IMR-90 (cell line): ENCODE measurements at regions of chr10 and their contacts with region 1.

Region 1: DNA sequence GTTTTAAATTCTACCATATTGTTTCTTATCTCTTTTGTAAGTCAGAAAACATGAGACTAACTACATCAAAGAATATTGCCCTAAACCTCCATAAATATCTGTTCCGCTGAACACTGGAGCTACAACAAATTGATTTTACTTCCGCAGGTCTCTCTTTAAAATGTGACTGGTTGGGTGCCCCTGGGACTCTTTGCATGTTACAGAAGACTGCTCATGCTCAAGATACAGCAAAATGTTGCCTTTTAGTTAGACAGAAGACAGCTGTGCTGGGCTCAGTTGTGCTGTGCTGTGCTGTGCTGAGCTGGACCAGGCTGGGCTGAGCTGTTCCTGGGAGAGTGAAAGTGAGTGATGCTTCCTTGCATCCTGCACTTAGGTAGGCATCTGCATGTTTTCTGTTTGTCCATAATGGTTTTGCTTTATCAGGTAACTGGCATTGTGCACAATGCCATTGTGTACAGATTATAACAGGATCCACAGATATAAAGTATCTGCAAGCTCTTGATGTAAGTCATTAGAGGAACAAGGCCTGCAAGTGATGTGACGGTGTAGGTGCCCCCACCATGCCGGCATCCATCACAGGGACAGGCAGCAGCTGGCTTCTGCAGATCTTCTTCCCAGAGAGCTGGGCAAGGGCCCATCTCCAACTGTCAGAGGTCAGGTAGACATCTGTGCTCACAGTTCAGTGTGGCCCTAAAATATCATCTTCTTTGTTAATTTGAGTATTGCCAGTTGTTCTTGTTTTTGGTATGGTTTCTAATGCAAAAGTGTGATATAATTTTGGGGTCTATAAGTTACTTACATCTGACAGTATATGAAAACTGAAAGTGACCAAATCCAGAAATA is 972.5 kb upstream of the CELF2 start:
- DNase-seq: no peak
- ATAC-seq: no peak
- H3K4me3 ChIP-seq: no peak overlapping the region
- H3K27ac ChIP-seq: no peak overlapping the region
- H3K4me1 ChIP-seq: peaks cover 1% of the 10 kb centered on the region; the same call in 1 of the 2 replicates
- H3K27me3 ChIP-seq: no peaks in the 10 kb centered on the region
- CTCF ChIP-seq: no peak
- POLR2A ChIP-seq: no peak
- RAD21 ChIP-seq: no peak

Region 2: DNA sequence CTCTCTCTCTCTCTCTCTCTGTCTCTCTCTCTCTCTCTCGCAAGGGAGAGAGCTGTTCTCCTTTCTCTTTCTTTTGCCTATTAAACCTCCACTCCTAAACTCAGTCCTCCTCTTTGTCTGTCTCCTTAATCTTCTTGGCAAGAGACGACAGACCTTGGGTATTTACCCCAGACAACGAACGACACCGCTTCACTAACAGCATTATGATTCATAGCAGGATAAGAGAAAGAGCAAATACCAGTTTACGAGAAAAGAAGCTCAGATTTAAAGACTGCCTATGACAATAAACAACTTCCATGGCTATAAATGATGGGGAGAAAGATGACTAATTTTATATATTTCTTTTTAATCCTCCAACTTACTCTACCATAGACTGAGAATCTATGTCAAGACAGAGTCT is 423.9 kb before region 1 on chr10:
- CTCF ChIA-PET with region 1: no interaction called
- POLR2A ChIA-PET with region 1: no interaction called
- dilution Hi-C with region 1: no loop called
- in situ Hi-C with region 1: no loop called
- intact Hi-C with region 1: loop called (anchors 10 kb)
- DNase-seq: peak; percentile 73
- ATAC-seq: peak; percentile 62
- H3K4me3 ChIP-seq: no peak overlapping the region
- H3K27ac ChIP-seq: peak overlapping the region; percentile 49; the same call in 1 of the 2 replicates
- H3K4me1 ChIP-seq: peaks cover 3% of the 10 kb centered on the region; the same call in 1 of the 2 replicates
- H3K27me3 ChIP-seq: no peaks in the 10 kb centered on the region
- CTCF ChIP-seq: no peak
- POLR2A ChIP-seq: no peak
- RAD21 ChIP-seq: no peak

Region 3: DNA sequence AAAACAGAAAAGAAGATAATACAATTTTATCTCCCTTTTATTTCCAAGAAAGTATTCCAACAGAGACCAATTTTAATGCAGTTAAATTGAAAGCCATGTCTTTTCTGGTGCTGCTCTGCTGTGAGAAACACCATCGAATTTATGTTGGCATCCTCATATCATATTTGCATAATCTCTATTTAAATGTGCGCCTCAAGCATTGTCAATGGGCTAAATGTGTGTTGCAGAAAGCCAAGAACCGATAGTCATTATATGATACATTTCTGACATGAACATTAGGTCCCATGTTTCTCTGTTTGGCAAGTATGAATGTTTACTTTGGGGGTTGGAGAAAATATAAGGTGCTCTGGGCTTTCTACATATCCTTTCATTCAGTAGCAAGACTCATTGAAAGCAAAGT is 51.0 kb before region 1 on chr10:
- CTCF ChIA-PET with region 1: no interaction called
- POLR2A ChIA-PET with region 1: no interaction called
- dilution Hi-C with region 1: no loop called
- in situ Hi-C with region 1: no loop called
- intact Hi-C with region 1: no loop called
- DNase-seq: no peak
- ATAC-seq: no peak
- H3K4me3 ChIP-seq: no peak overlapping the region
- H3K27ac ChIP-seq: no peak overlapping the region
- H3K4me1 ChIP-seq: no peaks in the 10 kb centered on the region
- H3K27me3 ChIP-seq: no peaks in the 10 kb centered on the region
- CTCF ChIP-seq: no peak
- POLR2A ChIP-seq: no peak
- RAD21 ChIP-seq: no peak

Region 4: DNA sequence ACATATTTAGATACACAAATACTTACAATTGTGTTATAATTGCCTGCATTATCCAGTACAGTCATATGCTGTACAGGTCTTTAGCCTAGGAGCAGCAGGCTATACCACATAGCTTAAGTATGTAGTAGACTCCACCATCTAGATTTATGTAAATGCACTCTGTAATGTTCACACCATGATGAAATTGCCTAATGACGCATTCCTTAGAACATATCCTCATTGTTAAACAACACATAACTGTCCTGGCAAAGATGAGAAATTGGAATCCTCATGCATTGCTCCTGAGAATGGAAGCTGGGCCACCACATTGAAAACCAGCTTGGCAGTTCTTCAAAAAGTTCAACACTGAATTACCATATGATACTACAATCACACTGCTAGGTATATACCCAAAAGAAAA is 30.3 kb before region 1 on chr10:
- CTCF ChIA-PET with region 1: no interaction called
- POLR2A ChIA-PET with region 1: no interaction called
- dilution Hi-C with region 1: no loop called
- in situ Hi-C with region 1: no loop called
- intact Hi-C with region 1: no loop called
- DNase-seq: peak; percentile 13
- ATAC-seq: no peak
- H3K4me3 ChIP-seq: no peak overlapping the region
- H3K27ac ChIP-seq: no peak overlapping the region
- H3K4me1 ChIP-seq: no peaks in the 10 kb centered on the region
- H3K27me3 ChIP-seq: no peaks in the 10 kb centered on the region
- CTCF ChIP-seq: no peak
- POLR2A ChIP-seq: no peak
- RAD21 ChIP-seq: no peak